HCT116 (cell line): ENCODE measurements at regions of chr15 and their contacts with region 1.

Region 1: DNA sequence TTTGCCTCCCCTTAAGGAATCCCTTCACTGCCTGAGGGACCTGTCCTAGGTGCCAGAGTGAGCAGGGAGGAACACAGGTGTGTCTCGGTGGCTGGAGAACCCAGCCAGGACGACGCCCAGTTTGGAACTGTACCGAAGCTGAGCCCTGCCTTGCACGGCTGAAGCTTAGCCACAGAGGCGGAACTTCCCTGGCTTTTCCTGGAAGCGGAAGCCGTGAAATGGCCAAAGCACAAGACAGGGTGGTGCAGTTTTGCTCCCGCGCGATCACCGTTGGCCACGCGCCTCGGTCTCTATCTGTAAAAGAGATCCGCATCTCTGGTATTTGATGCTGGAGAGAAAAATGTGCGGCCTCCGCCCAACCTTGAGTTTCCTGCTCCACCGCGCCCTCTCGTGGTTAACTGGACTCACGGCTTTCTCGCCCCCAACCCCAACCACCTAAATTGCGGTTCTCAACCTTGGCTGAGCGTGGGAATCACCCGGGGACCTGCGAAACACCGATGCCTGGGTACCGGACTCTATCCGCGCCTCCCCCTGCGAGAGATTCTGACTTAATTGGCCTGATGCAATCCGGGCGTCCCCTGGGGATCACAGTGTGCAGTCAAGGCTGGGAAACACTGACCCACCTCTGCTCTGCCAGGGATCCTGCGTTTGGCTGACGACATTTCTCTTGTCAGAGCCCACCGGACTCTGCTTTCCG is 70.7 kb upstream of the ABHD2 start:
- DNase-seq: peak; percentile 76
- ATAC-seq: peak; percentile 89
- H3K4me3 ChIP-seq: peak overlapping the region; percentile 36 to 55
- H3K27ac ChIP-seq: no peak overlapping the region
- H3K4me1 ChIP-seq: peaks cover 13 to 19% of the 10 kb centered on the region in 2 experiments
- H3K27me3 ChIP-seq: no peaks in the 10 kb centered on the region
- CTCF ChIP-seq: peak; percentile 87 to 92 (median 90)
- POLR2A ChIP-seq: no peak
- RAD21 ChIP-seq: peak; percentile 85

Region 2: DNA sequence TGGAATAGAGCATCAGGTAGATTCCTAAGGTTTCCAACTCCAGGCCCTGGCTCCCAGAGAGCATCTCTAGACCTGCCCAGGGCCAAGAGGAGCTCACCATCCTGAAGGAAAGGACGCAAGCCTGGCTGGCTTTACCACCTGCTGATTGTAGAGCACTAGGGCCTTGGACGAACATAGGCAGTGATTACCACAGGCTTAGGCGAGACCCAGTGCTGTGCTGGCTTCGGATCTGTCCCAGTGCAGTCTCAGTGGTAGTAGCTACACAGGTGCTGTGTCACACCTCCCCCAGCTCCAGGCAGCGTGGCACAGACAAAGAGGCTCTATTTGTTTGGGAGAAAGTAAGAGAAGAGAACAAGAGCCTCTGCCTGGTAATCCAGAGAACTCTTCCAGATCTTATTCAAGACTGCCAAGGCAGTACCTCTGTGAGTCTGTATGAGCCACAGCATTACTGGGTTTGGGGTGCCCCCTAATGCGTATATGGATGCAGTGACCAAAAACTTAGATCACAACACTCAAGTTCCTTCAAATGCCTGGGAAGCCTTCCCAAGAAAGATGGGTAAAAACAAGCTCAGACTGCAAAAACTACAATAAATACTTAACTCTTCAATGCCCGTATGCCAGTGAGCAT is 353.3 kb before region 1 on chr15:
- CTCF ChIA-PET with region 1: no interaction called
- POLR2A ChIA-PET with region 1: no interaction called
- RAD21 ChIA-PET with region 1: no interaction called
- intact Hi-C with region 1: loop called (anchors 10 kb)
- DNase-seq: no peak
- ATAC-seq: peak; percentile 62
- H3K4me3 ChIP-seq: no peak overlapping the region
- H3K27ac ChIP-seq: no peak overlapping the region
- H3K4me1 ChIP-seq: peaks cover 3 to 7% of the 10 kb centered on the region in 2 experiments; a peak in 3 of 4 replicates
- H3K27me3 ChIP-seq: no peaks in the 10 kb centered on the region
- CTCF ChIP-seq: peak; percentile 9 to 16 (median 11); a peak in 1 of 6 replicates
- POLR2A ChIP-seq: no peak
- RAD21 ChIP-seq: peak; percentile 51

Region 3: GRCh38 chr15:88897456-88898194 is 119.9 kb before region 1 on chr15:
- CTCF ChIA-PET with region 1: interaction called, 5 read pairs
- POLR2A ChIA-PET with region 1: no interaction called
- RAD21 ChIA-PET with region 1: no interaction called
- intact Hi-C with region 1: loop called (anchors 1 kb)
- DNase-seq: no peak
- ATAC-seq: peak; percentile 86
- H3K4me3 ChIP-seq: no peak overlapping the region
- H3K27ac ChIP-seq: peak overlapping the region; percentile 23; the same call in 1 of the 2 replicates
- H3K4me1 ChIP-seq: peaks cover 23 to 50% of the 10 kb centered on the region in 2 experiments
- H3K27me3 ChIP-seq: no peaks in the 10 kb centered on the region
- CTCF ChIP-seq: peak; percentile 50 to 75 (median 60); a peak in 5 of 6 replicates
- POLR2A ChIP-seq: no peak
- RAD21 ChIP-seq: 0 out of 2 replicates have a peak, but pooled peaks have one; percentile 5

Region 4: DNA sequence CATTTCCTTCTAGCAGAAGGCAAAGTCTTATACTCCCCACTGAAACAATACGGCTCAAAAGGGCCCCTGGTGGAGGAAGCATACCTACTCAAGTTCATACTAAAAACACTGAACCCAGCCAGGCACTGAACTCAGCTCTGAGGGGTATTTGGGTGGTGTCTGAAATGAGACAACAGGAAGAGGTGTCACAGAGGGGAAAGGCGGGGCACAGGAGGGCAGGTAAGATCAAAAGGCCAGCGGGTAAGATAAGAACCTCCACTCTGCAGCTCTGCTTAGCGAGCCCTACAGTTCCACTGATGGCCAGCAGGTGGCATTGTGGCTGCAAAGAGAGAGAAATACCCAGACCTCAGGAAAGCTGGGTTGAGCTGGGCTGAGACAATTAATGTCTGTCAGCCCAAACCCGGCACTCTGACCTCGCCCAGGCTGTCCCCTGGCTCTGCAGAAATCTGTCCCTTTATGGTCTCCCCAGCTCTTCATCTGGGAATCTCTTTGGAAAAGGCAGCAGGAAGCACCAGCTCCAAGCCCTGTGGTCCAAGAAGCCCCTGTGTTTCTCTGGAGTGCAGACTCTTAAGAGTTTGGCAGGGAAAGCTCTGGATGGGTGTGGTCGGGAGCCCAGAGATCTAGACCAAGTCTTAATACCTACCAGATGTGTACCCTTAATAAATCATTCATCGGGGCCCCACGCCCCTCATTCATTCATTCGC is 112.7 kb before region 1 on chr15:
- CTCF ChIA-PET with region 1: interaction called, 37 read pairs
- POLR2A ChIA-PET with region 1: interaction called, 5 read pairs
- RAD21 ChIA-PET with region 1: interaction called, 7 to 10 read pairs
- intact Hi-C with region 1: loop called (anchors 1 kb)
- DNase-seq: no peak
- ATAC-seq: peak; percentile 90
- H3K4me3 ChIP-seq: no peak overlapping the region
- H3K27ac ChIP-seq: no peak overlapping the region
- H3K4me1 ChIP-seq: peaks cover 7 to 28% of the 10 kb centered on the region in 2 experiments; a peak in 3 of 4 replicates
- H3K27me3 ChIP-seq: no peaks in the 10 kb centered on the region
- CTCF ChIP-seq: peak; percentile 94 to 97 (median 97)
- POLR2A ChIP-seq: no peak
- RAD21 ChIP-seq: peak; percentile 94